ENCODE measurements at regions of chr5 and their contacts with region 1.

Region 1: DNA sequence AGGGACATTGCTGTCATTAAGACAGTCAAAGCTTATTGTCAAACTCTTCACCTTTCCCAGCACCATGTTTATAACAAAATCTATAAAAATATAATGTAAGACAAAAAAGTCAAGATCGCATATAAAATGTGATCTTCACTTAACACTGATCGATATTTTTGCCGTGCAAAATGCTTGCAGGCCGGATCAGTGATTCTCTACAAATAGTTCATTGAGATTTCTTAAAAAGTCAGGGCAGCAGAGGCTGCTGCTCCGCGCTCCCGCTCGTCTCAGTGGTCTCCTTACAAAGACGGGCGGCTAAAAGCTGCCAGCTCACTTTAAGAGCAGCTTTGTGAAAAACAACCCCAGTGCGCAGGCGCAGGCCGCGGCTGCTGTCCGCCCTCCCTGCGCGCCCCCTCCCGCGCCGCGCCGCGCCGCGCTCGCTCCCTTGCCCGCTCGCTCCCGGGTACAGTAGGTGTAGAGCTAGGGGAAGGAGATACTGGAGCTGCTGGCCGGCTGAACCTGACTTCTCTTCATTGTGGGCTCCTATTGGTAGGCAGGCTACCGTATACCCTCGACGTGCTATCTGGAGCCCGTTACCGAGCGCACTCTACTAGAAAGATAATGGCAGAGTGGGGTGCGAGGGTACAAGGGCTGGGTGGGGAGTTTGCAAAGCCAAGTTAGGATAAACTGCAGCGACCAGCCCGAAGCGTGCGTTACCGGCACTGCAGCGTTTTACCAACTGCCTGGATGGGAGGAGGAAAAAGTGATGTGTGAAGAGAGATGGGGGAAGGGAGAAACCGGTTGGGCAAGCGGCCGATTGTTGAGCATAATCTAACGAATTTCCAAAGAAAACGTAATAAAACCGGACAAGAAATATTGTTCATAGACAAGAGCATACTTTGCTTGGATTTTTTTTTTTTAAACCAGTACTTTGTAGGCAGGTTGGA is at the start of gene ARRDC3:
- DNase-seq: peak; percentile 99
- total RNA-seq, gene ARRDC3: 20.1 TPM

Region 2: GRCh38 chr5:90878549-90879196 is 504.6 kb before region 1 on chr5:
- intact Hi-C with region 1: loop called (anchors 5 kb)
- DNase-seq: no peak

Region 3: DNA sequence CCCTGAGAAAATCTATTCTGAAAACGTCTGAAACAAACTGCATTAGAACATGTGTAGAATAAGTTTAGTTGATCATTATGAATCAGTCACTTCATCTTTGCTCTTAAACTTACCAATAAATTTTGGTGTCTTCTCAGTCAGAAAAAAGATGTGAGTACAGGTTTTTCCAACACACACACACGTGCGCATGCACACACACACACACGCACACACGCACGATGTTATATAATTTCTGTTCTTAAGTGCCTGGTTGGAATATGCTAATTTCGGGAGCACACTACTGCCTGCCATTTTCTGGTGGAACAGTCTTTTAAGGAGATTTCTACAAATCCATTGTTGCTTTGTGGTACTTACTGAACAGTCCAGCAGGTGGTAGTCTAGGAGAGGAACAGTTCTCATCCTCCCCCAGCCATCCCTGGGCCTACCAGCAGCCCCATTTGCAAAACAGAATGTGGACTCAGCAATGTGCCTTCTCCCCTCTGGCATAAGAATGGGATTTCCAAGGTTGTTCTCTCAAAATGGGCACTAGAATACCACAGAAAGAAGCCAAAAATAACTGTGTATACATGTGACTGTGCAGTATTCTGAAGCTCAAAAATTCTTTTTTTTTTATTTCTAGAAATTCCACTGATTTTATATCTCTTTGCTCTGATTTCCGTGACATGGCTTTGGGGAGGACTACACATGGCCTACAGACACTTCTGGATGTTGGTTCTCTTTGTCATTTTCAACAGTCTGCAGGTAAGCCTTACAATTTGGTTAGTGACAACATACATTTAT is 281.5 kb before region 1 on chr5:
- intact Hi-C with region 1: loop called (anchors 2 kb)
- DNase-seq: peak; percentile 82

Region 4: DNA sequence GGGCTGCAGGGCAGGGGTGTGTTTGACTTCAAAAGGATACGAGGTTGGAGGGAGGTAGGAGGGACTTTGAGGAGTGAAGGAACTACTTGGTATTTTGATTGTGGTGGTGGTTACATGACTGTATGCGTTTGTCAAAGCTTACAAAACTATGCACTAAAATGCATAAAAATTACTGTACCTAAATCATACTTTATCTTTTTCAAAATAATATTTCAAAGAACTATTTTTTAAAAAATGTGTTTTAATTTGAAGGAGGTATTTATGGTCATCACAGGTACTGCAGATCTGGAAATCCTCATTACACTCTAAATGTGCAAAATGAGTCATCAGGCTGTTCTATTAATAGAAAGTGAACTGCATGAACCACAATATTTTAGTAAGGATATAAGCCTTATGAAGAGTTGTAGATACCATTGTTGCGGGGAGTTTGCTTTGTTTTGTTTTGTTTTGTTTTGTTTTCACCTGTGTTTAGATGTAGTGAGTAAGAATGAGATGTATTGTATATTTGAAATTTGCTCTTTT is 117.0 kb before region 1 on chr5:
- intact Hi-C with region 1: loop called (anchors 5 kb)
- DNase-seq: no peak

Region 5: DNA sequence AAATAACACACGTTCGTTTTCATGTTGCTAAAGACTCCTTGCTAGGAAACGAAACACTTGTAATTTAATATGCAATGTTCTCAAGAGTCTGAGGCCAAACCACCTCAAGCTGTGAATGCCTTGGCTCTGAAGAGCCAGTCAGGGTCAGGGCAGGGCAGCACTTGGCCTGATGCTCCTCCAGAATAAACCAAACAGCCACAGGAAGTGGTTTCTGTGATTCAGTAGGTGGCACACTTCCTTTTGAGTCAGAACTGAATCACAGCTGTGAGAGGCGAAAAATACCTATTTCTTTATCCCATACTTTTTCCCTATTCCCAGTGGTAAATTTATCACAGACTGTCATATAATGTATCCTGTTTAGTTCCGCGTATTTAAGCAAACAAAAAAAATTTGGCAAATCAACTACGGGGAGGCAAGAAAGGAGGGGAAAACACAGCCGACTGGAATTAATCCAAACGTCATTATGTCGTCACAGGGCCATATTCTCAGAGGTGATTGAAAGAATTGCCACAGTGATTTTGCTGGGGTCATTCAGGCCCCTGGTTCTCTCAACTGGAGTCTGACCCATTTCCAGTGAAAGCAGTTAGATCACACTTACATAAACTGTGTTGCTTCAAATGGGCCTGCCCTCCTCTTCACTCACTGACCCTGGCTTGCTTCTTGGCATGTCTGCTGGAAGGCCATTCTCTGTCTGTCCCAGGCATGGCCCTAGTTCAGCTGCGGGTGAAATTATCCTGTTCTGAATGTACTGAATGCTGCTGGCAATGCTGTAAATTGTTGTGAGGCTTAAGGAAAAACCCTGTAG is 71.4 kb before region 1 on chr5:
- intact Hi-C with region 1: loop called (anchors 2 kb)
- DNase-seq: peak; percentile 77

Measured in cardiac septum (tissue), 1 donor.